ENCODE measurements at regions of chrX and their contacts with region 1.

Region 1: GRCh38 chrX:31036895-31037294 is 34.9 kb downstream of the FTHL17 start:
- DNase-seq: peak; percentile 30 to 75 (median 65)
- H3K4me3 ChIP-seq: no peak overlapping the region
- H3K27ac ChIP-seq: no peak overlapping the region
- H3K4me1 ChIP-seq: no peaks in the 10 kb centered on the region
- H3K27me3 ChIP-seq: peaks cover 6% of the 10 kb centered on the region
- CTCF ChIP-seq: peak; percentile 54 to 69 (median 60)
- POLR2A ChIP-seq: no peak

Region 2: GRCh38 chrX:30659421-30659820 is 377.5 kb before region 1 on chrX:
- intact Hi-C with region 1: no loop called
- DNase-seq: no peak
- H3K4me3 ChIP-seq: no peak overlapping the region
- H3K27ac ChIP-seq: no peak overlapping the region
- H3K4me1 ChIP-seq: no peaks in the 10 kb centered on the region
- H3K27me3 ChIP-seq: peaks cover 6% of the 10 kb centered on the region
- CTCF ChIP-seq: no peak
- POLR2A ChIP-seq: no peak

Region 3: DNA sequence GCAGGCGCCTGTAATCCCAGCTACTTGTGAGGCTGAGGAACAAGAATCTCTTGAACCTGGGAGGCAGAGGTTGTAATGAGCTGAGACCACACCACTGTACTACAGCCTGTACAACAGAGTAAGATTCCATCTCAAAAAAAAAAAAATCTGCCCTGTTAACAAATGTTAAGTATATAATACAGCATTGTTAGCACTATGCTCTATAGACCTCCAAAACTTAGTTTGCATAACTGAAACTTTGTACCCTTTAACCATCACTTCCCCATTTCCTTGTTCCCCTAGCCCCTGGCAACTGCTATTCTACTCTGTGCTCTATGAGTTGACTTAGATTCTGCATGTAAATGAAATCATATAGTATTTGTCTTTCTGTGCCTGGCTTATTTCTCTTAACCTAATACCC is 224.6 kb before region 1 on chrX:
- intact Hi-C with region 1: no loop called
- DNase-seq: no peak
- H3K4me3 ChIP-seq: no peak overlapping the region
- H3K27ac ChIP-seq: no peak overlapping the region
- H3K4me1 ChIP-seq: no peaks in the 10 kb centered on the region
- H3K27me3 ChIP-seq: peaks cover 19% of the 10 kb centered on the region
- CTCF ChIP-seq: no peak
- POLR2A ChIP-seq: no peak

Region 4: GRCh38 chrX:31136144-31136611 is 99.3 kb after region 1 on chrX:
- intact Hi-C with region 1: no loop called
- DNase-seq: no peak
- H3K4me3 ChIP-seq: no peak overlapping the region
- H3K27ac ChIP-seq: no peak overlapping the region
- H3K4me1 ChIP-seq: no peaks in the 10 kb centered on the region
- H3K27me3 ChIP-seq: no peaks in the 10 kb centered on the region
- CTCF ChIP-seq: no peak
- POLR2A ChIP-seq: no peak

Region 5: DNA sequence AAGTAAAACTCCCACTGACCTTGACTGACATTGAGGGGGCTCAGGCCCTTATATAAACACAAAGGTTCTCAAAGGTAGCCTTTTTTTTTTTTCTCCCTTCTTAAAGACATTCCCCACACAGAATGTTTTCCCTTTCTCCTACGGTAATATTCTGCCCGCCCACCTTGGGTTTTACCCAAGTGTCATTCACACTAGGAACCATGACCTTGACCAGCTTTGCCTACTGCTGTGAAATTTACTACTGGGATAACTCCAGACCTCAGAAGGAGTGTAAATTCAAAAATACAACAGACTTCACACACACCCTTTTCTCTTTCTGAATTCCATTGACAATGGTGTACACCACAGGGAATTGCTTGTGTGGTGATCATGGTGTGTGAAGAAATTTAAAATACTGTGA is 624.4 kb after region 1 on chrX:
- intact Hi-C with region 1: loop called in 1 of 2 experiments (anchors 5 kb)
- DNase-seq: no peak
- H3K4me3 ChIP-seq: no peak overlapping the region
- H3K27ac ChIP-seq: no peak overlapping the region
- H3K4me1 ChIP-seq: no peaks in the 10 kb centered on the region
- H3K27me3 ChIP-seq: no peaks in the 10 kb centered on the region
- CTCF ChIP-seq: no peak
- POLR2A ChIP-seq: no peak

Measured in adrenal gland (tissue), 19 donors.